Activated CD8-positive, alpha-beta memory T cell treated with anti-CD3 and anti-CD28 coated beads, Interleukin-2, amount 10 ng/mL, durations not matched to agents 7 days and 5 days (primary cell): ENCODE measurements at regions of chr11 and their contacts with region 1.

Region 1: GRCh38 chr11:65477149-65477965 is 21.5 kb upstream of the MALAT1 start:
- DNase-seq: peak; percentile 94
- ATAC-seq: peak; percentile 90
- H3K4me3 Mint-ChIP-seq: peak overlapping the region; percentile 83
- H3K27ac Mint-ChIP-seq: peak overlapping the region; percentile 95
- H3K4me1 Mint-ChIP-seq: peaks cover 20% of the 10 kb centered on the region
- H3K27me3 Mint-ChIP-seq: peaks cover 2% of the 10 kb centered on the region

Region 2: DNA sequence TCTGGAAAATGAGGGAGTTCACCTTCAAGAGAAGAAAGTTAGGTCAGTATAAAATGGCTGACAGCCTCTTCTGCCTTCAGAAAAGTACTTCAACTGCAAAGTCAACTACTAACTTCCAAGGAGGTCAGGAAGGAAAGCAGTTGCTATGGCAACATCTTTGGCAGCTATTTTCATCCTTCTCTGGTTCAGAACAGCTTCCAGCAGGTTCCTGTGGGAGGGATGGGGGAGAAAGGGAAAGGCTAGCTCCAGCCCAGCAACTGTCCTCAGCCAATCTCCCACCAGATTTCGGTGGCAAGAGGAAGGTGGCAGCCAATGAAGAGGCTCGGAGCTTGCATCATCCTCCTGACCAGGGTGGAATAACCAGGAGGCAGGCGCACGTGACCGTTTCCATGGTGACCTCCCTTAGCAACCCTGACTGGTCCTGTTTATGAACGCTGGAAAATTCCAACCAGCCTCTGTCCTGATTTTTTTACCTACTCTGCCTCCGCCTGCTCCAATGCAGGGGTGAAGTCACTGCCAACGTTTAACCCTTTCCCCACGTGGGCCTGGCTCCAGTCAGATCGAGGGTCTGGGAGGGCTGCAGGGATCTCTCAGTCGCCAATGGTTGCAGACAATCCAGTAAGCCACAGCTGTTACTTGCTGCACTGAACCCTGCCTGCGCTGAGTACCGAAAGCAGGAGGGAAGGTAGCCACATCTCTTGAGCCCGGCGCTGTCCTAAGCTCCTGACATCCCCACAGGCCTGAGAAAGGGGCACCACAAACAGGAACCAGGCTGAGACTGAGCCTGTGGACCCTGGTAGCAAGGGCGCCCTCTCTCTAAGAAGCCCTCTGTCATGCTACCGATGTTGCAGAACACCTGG is 10.3 kb after region 1 on chr11:
- CTCF ChIA-PET with region 1: interaction called, 102 read pairs
- DNase-seq: no peak
- ATAC-seq: no peak
- H3K4me3 Mint-ChIP-seq: no peak overlapping the region
- H3K27ac Mint-ChIP-seq: no peak overlapping the region
- H3K4me1 Mint-ChIP-seq: peaks cover 13% of the 10 kb centered on the region
- H3K27me3 Mint-ChIP-seq: peaks cover 5% of the 10 kb centered on the region

Region 3: GRCh38 chr11:65672186-65672860 is 195.0 kb after region 1 on chr11:
- CTCF ChIA-PET with region 1: no interaction called
- DNase-seq: no peak
- ATAC-seq: no peak
- H3K4me3 Mint-ChIP-seq: no peak overlapping the region
- H3K27ac Mint-ChIP-seq: no peak overlapping the region
- H3K4me1 Mint-ChIP-seq: peaks cover 3% of the 10 kb centered on the region
- H3K27me3 Mint-ChIP-seq: no peaks in the 10 kb centered on the region